ENCODE measurements at regions of chr16 and their contacts with region 1.

Region 1: DNA sequence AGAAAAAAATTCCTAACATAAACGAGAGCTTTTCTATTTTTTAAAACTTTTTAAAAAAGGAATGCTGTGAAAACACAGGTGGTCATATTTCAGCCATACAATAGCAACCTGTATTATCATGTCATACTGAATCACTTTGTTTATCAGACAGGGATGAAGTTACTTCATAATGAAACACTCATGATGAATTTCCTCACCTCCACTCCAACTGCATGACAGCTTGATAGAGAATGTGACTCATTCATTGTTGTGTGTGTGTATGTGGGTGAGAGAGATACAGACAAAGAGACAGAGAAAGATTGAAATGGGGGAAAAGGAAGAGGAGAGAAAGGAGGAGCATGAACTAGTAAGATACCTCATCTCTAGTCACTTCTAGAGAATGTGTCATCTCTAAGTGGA is 109.0 kb downstream of the SYCE1L start:
- DNase-seq: no peak
- H3K4me3 ChIP-seq: no peak overlapping the region
- H3K4me3 Mint-ChIP-seq: no peak overlapping the region
- H3K27ac Mint-ChIP-seq: no peak overlapping the region
- H3K4me1 ChIP-seq: peaks cover 41% of the 10 kb centered on the region
- H3K4me1 Mint-ChIP-seq: peaks cover 27% of the 10 kb centered on the region
- H3K27me3 ChIP-seq: no peaks in the 10 kb centered on the region
- H3K27me3 Mint-ChIP-seq: no peaks in the 10 kb centered on the region
- CTCF ChIP-seq: no peak

Region 2: GRCh38 chr16:77158293-77158692 is 149.9 kb before region 1 on chr16:
- CTCF ChIA-PET with region 1: no interaction called
- POLR2A ChIA-PET with region 1: no interaction called
- intact Hi-C with region 1: no loop called
- DNase-seq: no peak
- H3K4me3 ChIP-seq: no peak overlapping the region
- H3K4me3 Mint-ChIP-seq: no peak overlapping the region
- H3K27ac Mint-ChIP-seq: no peak overlapping the region
- H3K4me1 ChIP-seq: no peaks in the 10 kb centered on the region
- H3K4me1 Mint-ChIP-seq: no peaks in the 10 kb centered on the region
- H3K27me3 ChIP-seq: no peaks in the 10 kb centered on the region; the same call in 1 of the 2 replicates
- H3K27me3 Mint-ChIP-seq: peaks cover 26% of the 10 kb centered on the region
- CTCF ChIP-seq: no peak

Region 3: GRCh38 chr16:77183137-77183536 is 125.0 kb before region 1 on chr16:
- CTCF ChIA-PET with region 1: no interaction called
- POLR2A ChIA-PET with region 1: no interaction called
- intact Hi-C with region 1: no loop called
- DNase-seq: no peak
- H3K4me3 ChIP-seq: no peak overlapping the region
- H3K4me3 Mint-ChIP-seq: no peak overlapping the region
- H3K27ac Mint-ChIP-seq: no peak overlapping the region
- H3K4me1 ChIP-seq: no peaks in the 10 kb centered on the region
- H3K4me1 Mint-ChIP-seq: no peaks in the 10 kb centered on the region
- H3K27me3 ChIP-seq: no peaks in the 10 kb centered on the region
- H3K27me3 Mint-ChIP-seq: peaks cover 24% of the 10 kb centered on the region
- CTCF ChIP-seq: no peak

Region 4: GRCh38 chr16:77289331-77289809 is 18.8 kb before region 1 on chr16:
- CTCF ChIA-PET with region 1: interaction called, 4 read pairs
- POLR2A ChIA-PET with region 1: interaction called, 7 read pairs
- intact Hi-C with region 1: loop called (anchors 1 kb)
- DNase-seq: peak; percentile 93 to 94
- H3K4me3 ChIP-seq: no peak overlapping the region
- H3K4me3 Mint-ChIP-seq: peak overlapping the region; percentile 70
- H3K27ac Mint-ChIP-seq: peak overlapping the region; percentile 97
- H3K4me1 ChIP-seq: peaks cover 40% of the 10 kb centered on the region
- H3K4me1 Mint-ChIP-seq: peaks cover 66% of the 10 kb centered on the region
- H3K27me3 ChIP-seq: no peaks in the 10 kb centered on the region
- H3K27me3 Mint-ChIP-seq: no peaks in the 10 kb centered on the region
- CTCF ChIP-seq: no peak

Region 5: DNA sequence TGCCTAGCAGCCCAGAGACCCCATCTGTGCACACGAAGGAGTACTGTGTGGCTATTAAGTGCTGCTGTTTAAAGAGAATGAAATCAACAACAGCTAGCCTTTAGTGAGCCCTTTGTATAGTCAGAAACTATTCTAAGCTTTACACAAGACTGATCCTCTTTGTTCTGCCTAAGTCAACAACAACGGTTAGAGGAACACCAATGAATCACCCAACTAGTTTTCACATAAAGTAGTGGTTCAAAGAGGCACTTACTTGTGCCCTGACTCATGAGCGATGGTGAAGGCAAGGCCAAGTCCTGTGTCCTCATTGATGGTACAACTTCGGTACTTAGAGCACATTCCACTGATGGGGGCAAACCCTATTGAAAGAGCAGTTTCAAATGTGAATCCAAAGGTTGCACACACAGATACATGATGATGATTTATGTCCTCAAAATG is 50.9 kb after region 1 on chr16:
- CTCF ChIA-PET with region 1: no interaction called
- POLR2A ChIA-PET with region 1: no interaction called
- intact Hi-C with region 1: loop called (anchors 1 kb)
- DNase-seq: peak in 1 of 2 experiments; percentile 53
- H3K4me3 ChIP-seq: no peak overlapping the region
- H3K4me3 Mint-ChIP-seq: peak overlapping the region; percentile 19
- H3K27ac Mint-ChIP-seq: no peak overlapping the region
- H3K4me1 ChIP-seq: peaks cover 30% of the 10 kb centered on the region
- H3K4me1 Mint-ChIP-seq: peaks cover 24% of the 10 kb centered on the region
- H3K27me3 ChIP-seq: no peaks in the 10 kb centered on the region
- H3K27me3 Mint-ChIP-seq: no peaks in the 10 kb centered on the region
- CTCF ChIP-seq: no peak

Region 6: DNA sequence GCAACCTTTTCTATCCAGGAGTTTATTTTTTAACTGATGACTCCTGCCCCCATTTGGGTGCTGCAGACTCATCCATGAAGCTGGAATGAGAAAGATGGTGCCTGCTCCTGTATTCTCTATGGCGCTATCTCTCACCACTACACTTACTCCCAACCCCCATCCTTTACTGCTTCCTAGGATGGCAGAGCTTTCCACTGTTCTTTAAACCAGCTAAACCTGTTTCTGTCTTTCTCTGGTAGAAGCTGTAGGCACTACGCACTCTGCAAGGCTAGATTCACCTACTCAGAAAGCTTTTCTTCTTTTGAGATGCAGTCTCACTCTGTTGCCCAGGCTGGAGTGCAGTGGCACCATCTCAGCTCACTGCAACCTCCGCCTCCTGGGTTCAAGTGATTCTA is 79.7 kb after region 1 on chr16:
- CTCF ChIA-PET with region 1: no interaction called
- POLR2A ChIA-PET with region 1: no interaction called
- intact Hi-C with region 1: no loop called
- DNase-seq: peak in 1 of 2 experiments; percentile 39
- H3K4me3 ChIP-seq: no peak overlapping the region
- H3K4me3 Mint-ChIP-seq: no peak overlapping the region
- H3K27ac Mint-ChIP-seq: no peak overlapping the region
- H3K4me1 ChIP-seq: peaks cover 8% of the 10 kb centered on the region; the same call in 1 of the 2 replicates
- H3K4me1 Mint-ChIP-seq: no peaks in the 10 kb centered on the region
- H3K27me3 ChIP-seq: no peaks in the 10 kb centered on the region
- H3K27me3 Mint-ChIP-seq: no peaks in the 10 kb centered on the region
- CTCF ChIP-seq: no peak

Region 7: DNA sequence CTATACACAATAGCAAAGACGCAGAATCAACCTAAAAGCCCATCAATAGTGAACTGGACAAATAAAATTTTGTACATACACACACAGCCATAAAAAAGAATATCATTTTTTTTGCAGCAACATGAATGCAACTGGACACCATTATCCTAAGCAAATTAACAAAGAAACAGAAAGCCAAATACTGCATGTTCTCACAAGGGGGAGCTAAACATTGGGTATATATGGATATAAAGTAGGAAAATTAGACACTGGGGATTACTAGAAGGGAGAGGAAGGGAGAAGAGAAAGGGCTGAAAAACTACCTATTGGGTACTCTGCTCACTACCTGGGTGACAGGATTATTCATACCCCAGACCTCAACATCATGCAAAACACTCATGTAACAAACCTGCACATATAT is 98.5 kb after region 1 on chr16:
- CTCF ChIA-PET with region 1: no interaction called
- POLR2A ChIA-PET with region 1: no interaction called
- intact Hi-C with region 1: loop called (anchors 1 kb)
- DNase-seq: no peak
- H3K4me3 ChIP-seq: no peak overlapping the region
- H3K4me3 Mint-ChIP-seq: no peak overlapping the region
- H3K27ac Mint-ChIP-seq: no peak overlapping the region
- H3K4me1 ChIP-seq: peaks cover 4% of the 10 kb centered on the region; the same call in 1 of the 2 replicates
- H3K4me1 Mint-ChIP-seq: no peaks in the 10 kb centered on the region
- H3K27me3 ChIP-seq: no peaks in the 10 kb centered on the region
- H3K27me3 Mint-ChIP-seq: no peaks in the 10 kb centered on the region
- CTCF ChIP-seq: peak in 1 of 2 experiments; percentile 1

Region 8: GRCh38 chr16:77637940-77638339 is 329.8 kb after region 1 on chr16:
- CTCF ChIA-PET with region 1: no interaction called
- POLR2A ChIA-PET with region 1: no interaction called
- intact Hi-C with region 1: no loop called
- DNase-seq: no peak
- H3K4me3 ChIP-seq: no peak overlapping the region
- H3K4me3 Mint-ChIP-seq: no peak overlapping the region
- H3K27ac Mint-ChIP-seq: no peak overlapping the region
- H3K4me1 ChIP-seq: peaks cover 6% of the 10 kb centered on the region; the same call in 1 of the 2 replicates
- H3K4me1 Mint-ChIP-seq: no peaks in the 10 kb centered on the region
- H3K27me3 ChIP-seq: no peaks in the 10 kb centered on the region
- H3K27me3 Mint-ChIP-seq: peaks cover 16% of the 10 kb centered on the region
- CTCF ChIP-seq: no peak

Measured in Caco-2 (cell line).